Activated CD8-positive, alpha-beta T cell treated with anti-CD3 and anti-CD28 coated beads for 36 hours (primary cell): ENCODE measurements at regions of chr14 and their contacts with region 1.

Region 1: DNA sequence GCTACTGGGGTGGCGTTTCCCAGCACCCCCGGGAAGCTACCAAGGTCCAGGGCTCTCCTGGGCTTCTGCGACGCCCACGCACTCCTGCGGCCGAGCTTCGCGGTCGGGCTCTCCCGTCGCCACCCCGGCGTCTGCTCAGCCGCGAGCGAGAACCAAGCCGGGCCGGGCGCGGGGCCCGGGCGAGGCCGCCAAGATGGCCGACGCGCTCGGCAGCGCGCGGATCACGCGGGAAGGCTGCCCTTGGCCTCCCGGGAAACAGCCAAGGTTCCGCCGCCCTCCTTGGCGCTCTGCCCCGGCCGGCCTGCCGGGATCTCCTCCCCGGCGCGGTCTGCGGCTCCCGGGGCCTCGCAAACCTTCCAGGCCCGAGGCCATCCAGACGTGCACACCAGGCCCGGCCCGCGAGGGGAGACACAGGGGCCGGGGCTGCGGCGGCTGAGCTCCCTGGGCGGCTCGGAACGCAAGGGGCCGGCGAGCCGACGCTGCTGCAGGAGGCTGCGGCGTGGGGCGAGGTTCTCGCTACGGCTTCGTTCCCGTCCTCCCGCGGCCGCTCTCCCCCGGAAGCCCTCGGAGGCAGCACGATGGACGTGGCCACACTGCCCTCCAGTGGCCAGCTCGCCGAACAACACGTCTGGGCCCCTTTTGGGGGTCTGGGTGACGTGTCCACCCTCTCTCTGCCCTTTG is 23.5 kb upstream of the ZFP36L1 start:
- DNase-seq: peak; percentile 92
- ATAC-seq: peak; percentile 74
- H3K4me3 Mint-ChIP-seq: peak overlapping the region; percentile 77
- H3K27ac Mint-ChIP-seq: peak overlapping the region; percentile 96
- H3K4me1 Mint-ChIP-seq: peaks cover 74% of the 10 kb centered on the region
- H3K27me3 Mint-ChIP-seq: no peaks in the 10 kb centered on the region
- CTCF ChIP-seq: peak; percentile 98

Region 2: GRCh38 chr14:67943947-67944346 is 872.5 kb before region 1 on chr14:
- CTCF ChIA-PET with region 1: interaction called, 10 read pairs
- POLR2A ChIA-PET with region 1: no interaction called
- intact Hi-C with region 1: loop called (anchors 10 kb)
- DNase-seq: peak; percentile 67
- ATAC-seq: peak; percentile 65
- H3K4me3 Mint-ChIP-seq: no peak overlapping the region
- H3K27ac Mint-ChIP-seq: no peak overlapping the region
- H3K4me1 Mint-ChIP-seq: peaks cover 2% of the 10 kb centered on the region
- H3K27me3 Mint-ChIP-seq: no peaks in the 10 kb centered on the region
- CTCF ChIP-seq: peak; percentile 82

Region 3: DNA sequence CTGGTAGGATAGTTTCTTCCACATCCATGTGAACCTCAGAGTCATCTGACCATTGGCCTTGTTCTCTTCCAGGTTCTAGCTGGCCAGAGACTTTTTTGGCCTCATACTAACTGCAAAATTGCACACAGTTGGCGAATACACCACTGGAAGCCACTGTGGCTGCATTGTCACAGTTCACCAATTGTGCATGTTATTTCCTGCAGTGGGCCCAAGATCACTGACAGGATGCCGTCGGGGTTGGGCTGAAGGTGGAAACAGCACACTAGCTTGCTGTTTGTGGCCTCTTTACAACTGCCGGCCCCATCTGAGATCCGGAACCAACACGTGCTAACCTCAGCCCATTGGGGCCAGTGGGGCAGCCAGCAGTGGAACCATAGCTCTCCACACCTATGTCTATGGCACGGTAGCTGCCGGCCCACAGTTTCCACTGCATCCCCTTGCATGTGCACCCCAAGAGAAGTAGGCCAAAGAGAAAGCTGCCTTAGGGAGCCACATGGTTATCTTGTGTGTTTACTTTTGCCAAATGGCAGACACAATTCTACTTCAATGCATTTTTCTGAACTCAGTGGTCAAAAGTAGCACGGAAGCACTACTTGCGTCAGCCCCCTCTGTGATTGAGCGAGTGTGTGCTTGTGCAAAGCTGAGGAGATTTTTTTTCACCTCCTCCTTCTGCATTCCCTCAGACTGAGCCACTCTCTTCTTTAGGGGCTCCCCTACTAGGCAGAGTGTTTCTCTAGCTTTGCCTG is 532.9 kb before region 1 on chr14:
- CTCF ChIA-PET with region 1: interaction called, 8 read pairs
- POLR2A ChIA-PET with region 1: interaction called, 10 read pairs
- intact Hi-C with region 1: no loop called
- DNase-seq: peak; percentile 78
- ATAC-seq: peak; percentile 48
- H3K4me3 Mint-ChIP-seq: peak overlapping the region; percentile 33
- H3K27ac Mint-ChIP-seq: peak overlapping the region; percentile 82
- H3K4me1 Mint-ChIP-seq: peaks cover 82% of the 10 kb centered on the region
- H3K27me3 Mint-ChIP-seq: no peaks in the 10 kb centered on the region
- CTCF ChIP-seq: no peak

Region 4: DNA sequence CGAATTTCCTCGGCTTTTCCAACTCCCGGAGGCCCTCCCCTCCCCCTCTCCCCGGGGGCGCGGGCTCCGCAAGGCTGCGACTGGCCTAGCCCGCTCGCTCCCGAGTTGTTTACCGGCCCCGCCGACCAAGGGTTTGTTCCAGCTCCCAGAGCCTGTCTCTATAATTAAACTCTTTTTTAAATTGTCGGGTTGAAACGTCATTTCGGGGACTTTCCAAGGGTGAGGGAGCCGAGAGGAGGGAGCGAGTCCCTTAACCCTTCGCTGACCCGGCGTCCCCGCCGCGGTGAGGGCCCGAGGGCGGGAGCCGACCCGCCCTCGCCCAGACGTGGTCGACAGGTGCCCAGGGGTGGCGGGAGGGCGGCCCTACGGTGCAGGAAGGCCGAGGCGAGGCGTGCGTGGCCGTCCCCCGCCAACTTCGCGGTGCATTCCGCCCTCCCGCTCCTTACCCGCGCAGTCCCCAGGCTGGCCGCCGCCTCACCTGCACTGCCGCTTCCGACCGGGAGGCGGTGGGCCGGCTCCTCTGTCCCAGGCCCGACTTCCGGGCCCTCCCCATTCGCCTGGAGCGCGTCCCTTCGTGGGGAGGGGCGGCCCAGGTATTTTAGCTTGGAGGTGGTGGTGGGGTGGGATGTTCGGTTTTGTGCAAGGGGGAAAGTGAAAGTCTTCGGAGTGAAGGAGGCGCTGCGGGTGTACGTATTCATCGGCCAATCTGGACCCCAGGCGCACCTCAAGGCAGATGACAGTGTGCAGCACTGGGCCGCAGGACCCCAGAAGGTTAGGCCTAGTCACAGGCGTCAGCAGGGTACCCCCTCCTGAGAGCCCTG is 20.6 kb before region 1 on chr14:
- CTCF ChIA-PET with region 1: interaction called, 268 read pairs
- POLR2A ChIA-PET with region 1: interaction called, 207 read pairs
- intact Hi-C with region 1: loop called (anchors 2 kb)
- DNase-seq: peak; percentile 89
- ATAC-seq: peak; percentile 57
- H3K4me3 Mint-ChIP-seq: peak overlapping the region; percentile 88
- H3K27ac Mint-ChIP-seq: peak overlapping the region; percentile 100
- H3K4me1 Mint-ChIP-seq: peaks cover 46% of the 10 kb centered on the region
- H3K27me3 Mint-ChIP-seq: no peaks in the 10 kb centered on the region
- CTCF ChIP-seq: peak; percentile 90

Region 5: GRCh38 chr14:68862954-68863594 is 46.7 kb after region 1 on chr14:
- CTCF ChIA-PET with region 1: interaction called, 10 read pairs
- POLR2A ChIA-PET with region 1: no interaction called
- intact Hi-C with region 1: no loop called
- DNase-seq: peak; percentile 90
- ATAC-seq: peak; percentile 56
- H3K4me3 Mint-ChIP-seq: no peak overlapping the region
- H3K27ac Mint-ChIP-seq: no peak overlapping the region
- H3K4me1 Mint-ChIP-seq: no peaks in the 10 kb centered on the region
- H3K27me3 Mint-ChIP-seq: no peaks in the 10 kb centered on the region
- CTCF ChIP-seq: peak; percentile 72

Region 6: DNA sequence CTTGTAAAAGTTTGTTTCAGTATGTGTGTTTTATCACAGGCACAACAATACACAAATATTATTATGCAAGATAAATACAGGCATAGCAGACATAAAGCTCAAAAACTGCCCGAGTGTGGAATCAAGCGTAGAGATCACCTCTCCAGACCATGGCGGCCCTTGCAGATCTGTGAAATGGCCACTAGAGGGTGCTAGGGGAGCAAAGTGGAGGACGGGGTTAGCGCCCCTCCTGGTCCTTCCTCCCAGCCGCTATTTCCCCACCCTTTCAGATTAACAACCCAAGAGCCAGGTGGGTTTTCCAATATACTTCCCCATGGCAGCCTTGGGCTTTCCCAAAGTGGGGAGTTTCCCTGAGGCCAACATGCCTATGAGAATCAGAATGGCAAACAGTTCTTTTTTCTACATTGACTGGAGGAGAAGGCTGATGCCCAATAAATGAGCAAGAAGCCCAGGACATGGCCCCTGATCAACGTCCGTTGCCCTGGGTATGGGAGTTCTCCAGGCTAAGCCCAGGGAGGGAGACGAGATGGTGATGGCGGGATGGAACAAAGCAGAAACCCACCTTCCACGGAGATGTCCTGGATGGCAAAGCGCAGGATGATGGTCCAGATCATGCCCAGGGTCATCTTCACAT is 95.3 kb after region 1 on chr14:
- CTCF ChIA-PET with region 1: no interaction called
- POLR2A ChIA-PET with region 1: no interaction called
- intact Hi-C with region 1: no loop called
- DNase-seq: peak; percentile 86
- ATAC-seq: peak; percentile 89
- H3K4me3 Mint-ChIP-seq: no peak overlapping the region
- H3K27ac Mint-ChIP-seq: peak overlapping the region; percentile 81
- H3K4me1 Mint-ChIP-seq: peaks cover 51% of the 10 kb centered on the region
- H3K27me3 Mint-ChIP-seq: no peaks in the 10 kb centered on the region
- CTCF ChIP-seq: peak; percentile 99